ENCODE measurements at regions of chr6 and their contacts with region 1.

Region 1: GRCh38 chr6:34447910-34448309 is 18.0 kb upstream of the PACSIN1 start:
- DNase-seq: no peak
- H3K4me3 ChIP-seq: no peak overlapping the region
- H3K27ac ChIP-seq: no peak overlapping the region
- H3K4me1 ChIP-seq: no peaks in the 10 kb centered on the region
- H3K27me3 ChIP-seq: peaks cover 0 to 7% of the 10 kb centered on the region in 2 donors
- CTCF ChIP-seq: no peak

Region 2: GRCh38 chr6:33809594-33809993 is 638.3 kb before region 1 on chr6:
- intact Hi-C with region 1: loop called (anchors 10 kb)
- DNase-seq: no peak
- H3K4me3 ChIP-seq: no peak overlapping the region
- H3K27ac ChIP-seq: no peak overlapping the region
- H3K4me1 ChIP-seq: peaks cover 0 to 10% (median 4%) of the 10 kb centered on the region in 4 donors
- H3K27me3 ChIP-seq: peaks cover 0 to 84% of the 10 kb centered on the region in 2 donors
- CTCF ChIP-seq: no peak

Measured in tibial artery (tissue), 4 donors.